ENCODE measurements at regions of chr12 and their contacts with region 1.

Region 1: DNA sequence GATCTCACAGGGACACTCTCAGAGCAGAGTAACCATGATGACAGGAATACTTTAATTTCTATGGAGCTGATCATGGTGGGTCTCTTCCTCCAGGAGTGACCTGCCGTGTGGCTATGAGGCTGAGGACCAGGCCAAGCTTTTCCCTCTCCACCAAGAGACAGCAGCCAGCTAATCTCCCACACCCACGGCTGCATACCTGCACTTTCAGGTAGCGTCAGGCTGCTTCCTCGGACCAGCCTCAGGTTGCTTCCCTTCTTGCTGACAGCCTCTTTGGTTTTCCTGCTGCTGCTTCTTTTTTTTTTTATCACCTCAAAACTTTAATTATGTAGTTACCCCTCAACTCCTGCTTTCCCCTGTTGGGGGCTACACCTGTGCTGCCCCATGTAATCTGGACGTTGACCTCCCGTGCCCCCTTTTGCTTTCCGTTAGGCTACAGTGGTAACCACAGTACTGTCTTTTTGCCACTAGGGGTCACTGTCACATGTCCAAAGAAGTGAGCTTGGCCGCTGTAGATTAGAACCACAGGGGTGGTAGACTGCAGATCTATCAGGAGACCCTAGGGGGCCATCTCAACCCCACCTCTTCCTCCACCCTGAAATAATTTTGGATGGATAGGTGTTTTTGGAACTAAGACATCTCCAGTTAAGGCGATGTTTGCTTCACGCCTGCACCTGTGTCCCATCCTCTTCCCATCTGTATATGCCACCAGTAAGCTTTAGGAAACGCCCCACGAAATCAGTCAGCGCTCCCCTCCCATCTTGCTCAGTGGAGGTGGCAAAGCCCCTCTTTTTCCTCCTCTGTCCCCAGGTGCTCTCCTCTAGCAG is 7.8 kb upstream of the PIP4K2C start:
- DNase-seq: peak; percentile 49 to 82 (median 75)
- H3K4me3 ChIP-seq: no peak overlapping the region
- H3K4me3 Mint-ChIP-seq: peak overlapping the region in 2 of 7 donors; percentile 4 to 82
- H3K27ac ChIP-seq: no peak overlapping the region
- H3K27ac Mint-ChIP-seq: peak overlapping the region in 6 of 8 donors; percentile 26 to 92 (median 82)
- H3K4me1 ChIP-seq: no peaks in the 10 kb centered on the region
- H3K4me1 Mint-ChIP-seq: peaks cover 5 to 7% (median 5%) of the 10 kb centered on the region in 3 donors
- H3K27me3 ChIP-seq: no peaks in the 10 kb centered on the region
- H3K27me3 Mint-ChIP-seq: peaks cover 6 to 14% of the 10 kb centered on the region in 2 donors

Region 2: GRCh38 chr12:57462251-57462911 is 120.8 kb before region 1 on chr12:
- CTCF ChIA-PET with region 1: interaction called, 11 read pairs
- POLR2A ChIA-PET with region 1: no interaction called
- DNase-seq: peak; percentile 77 to 92 (median 83)
- H3K4me3 ChIP-seq: peak overlapping the region; percentile 69
- H3K4me3 Mint-ChIP-seq: peak overlapping the region; percentile 85 to 95 (median 93)
- H3K27ac ChIP-seq: peak overlapping the region; percentile 9
- H3K27ac Mint-ChIP-seq: peak overlapping the region; percentile 8 to 93 (median 80)
- H3K4me1 ChIP-seq: peaks cover 33% of the 10 kb centered on the region
- H3K4me1 Mint-ChIP-seq: peaks cover 30 to 49% (median 36%) of the 10 kb centered on the region in 3 donors
- H3K27me3 ChIP-seq: peaks cover 7% of the 10 kb centered on the region
- H3K27me3 Mint-ChIP-seq: peaks cover 6 to 19% of the 10 kb centered on the region in 2 donors

Region 3: DNA sequence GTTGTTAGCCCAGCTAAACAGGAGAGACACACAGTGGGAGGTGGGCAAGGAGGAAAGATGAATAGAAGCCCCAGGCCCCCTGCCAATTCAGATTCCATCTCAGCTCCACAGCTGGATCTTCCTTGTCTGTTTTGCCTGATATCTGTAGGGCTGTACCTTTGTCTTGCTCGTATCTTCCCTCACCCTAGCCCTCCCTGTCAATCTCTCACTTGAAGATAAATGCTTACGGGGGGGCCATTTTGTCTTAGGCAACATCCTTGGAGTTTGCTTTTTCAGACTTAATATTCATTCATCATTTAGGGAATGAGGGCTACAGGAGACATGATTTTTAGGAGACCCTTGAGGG is 30.9 kb before region 1 on chr12:
- CTCF ChIA-PET with region 1: no interaction called
- POLR2A ChIA-PET with region 1: no interaction called
- DNase-seq: no peak
- H3K4me3 ChIP-seq: no peak overlapping the region
- H3K4me3 Mint-ChIP-seq: peak overlapping the region in 1 of 7 donors; percentile 35
- H3K27ac ChIP-seq: peak overlapping the region; percentile 38
- H3K27ac Mint-ChIP-seq: no peak overlapping the region
- H3K4me1 ChIP-seq: peaks cover 15% of the 10 kb centered on the region
- H3K4me1 Mint-ChIP-seq: peaks cover 14 to 24% (median 21%) of the 10 kb centered on the region in 3 donors
- H3K27me3 ChIP-seq: no peaks in the 10 kb centered on the region
- H3K27me3 Mint-ChIP-seq: peaks cover 0 to 9% of the 10 kb centered on the region in 2 donors

Region 4: DNA sequence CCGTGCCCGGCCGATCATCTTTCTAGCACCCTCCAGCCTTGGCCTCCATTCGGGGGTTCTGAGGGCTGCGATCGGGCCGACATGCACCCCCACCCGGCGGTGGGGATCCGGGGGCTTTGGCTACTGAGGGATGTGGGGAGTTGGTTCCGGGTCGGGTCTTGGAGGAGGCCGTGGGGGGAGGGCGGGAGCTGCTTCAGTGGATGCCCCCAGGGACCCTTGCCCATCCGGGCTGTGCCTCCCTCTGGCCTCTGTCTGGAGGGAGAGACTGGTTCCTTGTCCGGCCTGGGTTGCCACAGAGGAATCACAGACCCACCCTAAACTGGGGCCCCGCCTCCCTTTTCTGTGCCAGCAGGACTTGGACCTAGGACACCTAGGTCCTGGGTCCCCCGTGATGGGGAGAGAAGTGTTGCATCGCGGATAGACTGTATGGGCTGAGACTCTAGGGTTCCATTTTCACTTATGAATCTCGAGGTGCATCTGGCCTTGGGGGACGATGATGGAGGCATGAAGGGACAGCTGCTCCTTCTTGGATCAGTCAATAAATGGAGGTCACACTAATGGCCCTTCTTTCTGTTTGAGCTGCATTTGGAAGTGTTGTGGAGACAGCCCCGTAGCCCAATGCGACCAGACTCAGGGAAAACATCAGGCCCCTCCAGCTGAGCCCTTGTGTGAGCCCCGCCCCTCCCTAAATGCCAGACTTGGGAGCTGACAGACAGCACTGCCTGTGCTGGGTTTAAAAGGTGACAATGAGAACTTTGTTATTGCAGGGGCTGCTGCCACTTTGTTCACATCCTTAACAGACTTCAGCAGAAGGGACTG is 22.0 kb after region 1 on chr12:
- CTCF ChIA-PET with region 1: interaction called, 12 read pairs
- POLR2A ChIA-PET with region 1: no interaction called
- DNase-seq: no peak
- H3K4me3 ChIP-seq: peak overlapping the region; percentile 69
- H3K4me3 Mint-ChIP-seq: peak overlapping the region; percentile 85 to 94 (median 88)
- H3K27ac ChIP-seq: no peak overlapping the region
- H3K27ac Mint-ChIP-seq: peak overlapping the region in 6 of 8 donors; percentile 80 to 96 (median 90)
- H3K4me1 ChIP-seq: peaks cover 29% of the 10 kb centered on the region
- H3K4me1 Mint-ChIP-seq: peaks cover 32 to 43% (median 37%) of the 10 kb centered on the region in 3 donors
- H3K27me3 ChIP-seq: no peaks in the 10 kb centered on the region
- H3K27me3 Mint-ChIP-seq: peaks cover 0 to under 1% of the 10 kb centered on the region in 2 donors

Region 5: DNA sequence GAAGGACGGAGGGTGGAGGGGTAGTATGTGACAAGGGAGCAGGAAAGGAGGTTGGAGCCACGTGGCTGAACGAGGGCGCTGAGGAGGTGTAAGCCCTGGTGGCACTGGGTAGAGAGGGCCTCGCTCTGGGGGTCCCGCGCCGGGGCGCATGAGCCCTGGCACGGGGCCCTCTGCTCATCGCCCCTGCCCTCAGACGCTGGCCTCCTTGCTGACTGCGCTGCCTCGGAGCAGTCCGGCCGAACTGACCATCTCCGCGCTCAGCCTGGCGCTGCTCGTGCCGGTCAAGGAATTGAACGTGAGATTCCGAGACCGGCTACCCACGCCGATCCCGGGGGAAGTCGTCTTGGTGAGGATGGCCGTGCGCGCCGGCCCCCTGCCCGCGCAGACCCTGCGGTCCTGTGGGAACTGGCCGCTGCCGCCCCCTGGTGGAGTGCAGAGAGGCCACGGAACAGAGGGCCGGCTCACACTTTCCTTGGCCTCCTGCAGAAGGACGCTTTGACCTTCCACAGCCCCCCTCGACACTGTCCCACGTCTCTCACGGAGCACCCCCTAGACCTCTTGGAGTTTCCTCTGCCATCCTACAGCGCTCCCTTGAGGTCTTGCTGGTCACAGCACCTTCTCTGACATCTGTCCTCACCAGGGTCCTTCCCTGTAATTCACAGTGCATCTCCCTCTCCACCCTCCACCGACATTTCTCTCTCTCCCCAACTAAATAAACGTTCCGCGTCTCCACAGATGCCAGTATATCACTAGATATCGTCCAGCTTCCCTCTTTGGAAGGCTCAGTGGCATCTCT is 38.5 kb after region 1 on chr12:
- CTCF ChIA-PET with region 1: interaction called, 85 read pairs
- POLR2A ChIA-PET with region 1: no interaction called
- DNase-seq: peak; percentile 39 to 65 (median 50)
- H3K4me3 ChIP-seq: peak overlapping the region; percentile 59
- H3K4me3 Mint-ChIP-seq: peak overlapping the region; percentile 49 to 91 (median 84)
- H3K27ac ChIP-seq: no peak overlapping the region
- H3K27ac Mint-ChIP-seq: peak overlapping the region in 3 of 8 donors; percentile 19 to 53 (median 44)
- H3K4me1 ChIP-seq: peaks cover 30% of the 10 kb centered on the region
- H3K4me1 Mint-ChIP-seq: peaks cover 28 to 34% (median 32%) of the 10 kb centered on the region in 3 donors
- H3K27me3 ChIP-seq: peaks cover 77% of the 10 kb centered on the region
- H3K27me3 Mint-ChIP-seq: peaks cover 86 to 92% of the 10 kb centered on the region in 2 donors

Region 6: DNA sequence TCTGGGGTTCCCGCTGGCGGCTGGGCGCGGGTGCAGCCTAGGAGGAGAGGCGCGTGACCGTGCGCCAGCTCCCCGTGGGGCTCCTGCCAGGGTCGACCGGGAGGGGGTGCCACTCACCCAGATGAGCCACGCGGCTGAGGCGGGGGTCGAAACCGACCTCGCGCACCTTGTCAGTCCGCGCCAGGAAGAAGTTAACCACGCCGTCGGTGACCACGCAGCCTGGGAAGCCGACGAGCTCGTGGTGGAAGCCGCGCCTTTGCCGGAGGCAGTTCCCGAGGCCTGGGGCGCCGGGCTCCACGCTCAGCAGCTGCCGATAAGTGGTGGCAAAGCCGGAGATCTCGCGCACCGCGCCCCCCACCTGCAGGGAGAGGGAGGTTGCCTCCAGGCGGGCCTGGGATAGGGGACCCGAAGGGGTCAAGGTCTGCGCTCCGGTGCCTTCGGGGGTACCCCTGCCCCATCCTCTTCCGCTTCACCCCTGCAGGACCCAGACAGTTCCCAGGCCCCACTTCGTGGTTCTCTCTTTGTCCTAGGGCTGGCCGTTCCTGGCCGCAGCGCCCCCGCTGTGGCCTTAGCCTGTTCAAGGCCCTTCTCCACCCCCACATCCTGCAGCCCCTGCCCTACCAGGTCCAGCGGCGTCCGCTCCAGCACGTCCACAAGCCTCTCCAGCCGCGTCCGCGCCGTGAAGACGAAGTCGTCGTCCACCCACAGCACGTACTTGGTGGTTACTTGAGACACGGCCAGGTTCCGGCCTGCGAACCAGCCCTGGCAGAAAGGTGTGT is 44.5 kb after region 1 on chr12:
- CTCF ChIA-PET with region 1: interaction called, 85 read pairs
- POLR2A ChIA-PET with region 1: no interaction called
- DNase-seq: no peak
- H3K4me3 ChIP-seq: no peak overlapping the region
- H3K4me3 Mint-ChIP-seq: peak overlapping the region in 5 of 7 donors; percentile 15 to 50 (median 29)
- H3K27ac ChIP-seq: no peak overlapping the region
- H3K27ac Mint-ChIP-seq: no peak overlapping the region
- H3K4me1 ChIP-seq: peaks cover 5% of the 10 kb centered on the region
- H3K4me1 Mint-ChIP-seq: peaks cover 0 to 20% (median 5%) of the 10 kb centered on the region in 3 donors
- H3K27me3 ChIP-seq: peaks cover 65% of the 10 kb centered on the region
- H3K27me3 Mint-ChIP-seq: peaks cover 61 to 87% of the 10 kb centered on the region in 2 donors

Region 7: DNA sequence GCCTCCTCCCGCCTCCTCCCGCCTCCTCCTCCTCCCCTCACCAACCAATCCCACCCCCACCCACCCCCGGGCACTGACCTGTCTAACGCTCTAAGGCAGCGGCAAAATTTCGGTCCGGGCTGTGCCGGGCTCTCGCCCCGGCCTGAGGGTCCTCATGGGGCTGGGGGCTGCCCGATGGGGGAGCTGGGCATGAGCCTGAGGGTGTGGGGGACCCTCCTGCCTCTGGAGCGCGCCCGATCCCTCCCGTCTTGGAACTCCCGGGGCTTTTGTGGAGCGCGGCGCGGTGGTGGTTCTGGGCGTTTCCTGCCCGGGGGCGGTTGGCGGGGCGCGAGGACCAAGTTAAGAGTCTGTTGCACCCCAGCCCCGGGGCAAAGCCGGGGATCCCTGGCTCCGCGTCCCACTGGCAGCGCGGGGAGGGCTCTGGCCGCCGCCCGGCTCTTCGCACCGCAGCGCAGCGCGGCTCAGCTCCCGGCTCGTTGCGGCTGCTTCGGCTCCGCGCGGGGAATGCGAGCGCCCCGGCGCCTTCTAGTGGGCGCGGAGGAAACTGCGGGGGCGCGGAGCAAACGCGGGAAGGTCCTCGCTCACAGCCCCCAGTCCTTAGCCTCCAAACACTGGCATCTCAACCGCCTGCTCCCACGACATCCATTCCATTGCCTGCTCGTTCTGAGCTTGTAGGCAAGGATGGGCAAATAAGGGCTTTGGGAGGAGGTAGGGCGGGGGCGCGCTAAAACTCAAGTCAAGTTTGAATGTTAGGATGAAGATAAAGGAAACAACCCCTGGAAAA is 49.7 kb after region 1 on chr12 and contains the start of gene B4GALNT1:
- CTCF ChIA-PET with region 1: interaction called, 35 read pairs
- POLR2A ChIA-PET with region 1: no interaction called
- DNase-seq: peak; percentile 44 to 71 (median 57)
- H3K4me3 ChIP-seq: peak within 1 kb of the TSS; percentile 49
- H3K4me3 Mint-ChIP-seq: peak within 1 kb of the TSS; percentile 26 to 84 (median 71)
- H3K27ac ChIP-seq: no peak within 1 kb of the TSS
- H3K27ac Mint-ChIP-seq: peak within 1 kb of the TSS in 3 of 8 donors; percentile 14 to 33 (median 19)
- H3K4me1 ChIP-seq: peaks cover 11% of the 10 kb centered on the region
- H3K4me1 Mint-ChIP-seq: peaks cover 0 to 15% (median 8%) of the 10 kb centered on the region in 3 donors
- H3K27me3 ChIP-seq: peaks cover 22% of the 10 kb centered on the region
- H3K27me3 Mint-ChIP-seq: peaks cover 35 to 59% of the 10 kb centered on the region in 2 donors
- total RNA-seq, gene B4GALNT1: 2.9 to 4.1 TPM

Region 8: DNA sequence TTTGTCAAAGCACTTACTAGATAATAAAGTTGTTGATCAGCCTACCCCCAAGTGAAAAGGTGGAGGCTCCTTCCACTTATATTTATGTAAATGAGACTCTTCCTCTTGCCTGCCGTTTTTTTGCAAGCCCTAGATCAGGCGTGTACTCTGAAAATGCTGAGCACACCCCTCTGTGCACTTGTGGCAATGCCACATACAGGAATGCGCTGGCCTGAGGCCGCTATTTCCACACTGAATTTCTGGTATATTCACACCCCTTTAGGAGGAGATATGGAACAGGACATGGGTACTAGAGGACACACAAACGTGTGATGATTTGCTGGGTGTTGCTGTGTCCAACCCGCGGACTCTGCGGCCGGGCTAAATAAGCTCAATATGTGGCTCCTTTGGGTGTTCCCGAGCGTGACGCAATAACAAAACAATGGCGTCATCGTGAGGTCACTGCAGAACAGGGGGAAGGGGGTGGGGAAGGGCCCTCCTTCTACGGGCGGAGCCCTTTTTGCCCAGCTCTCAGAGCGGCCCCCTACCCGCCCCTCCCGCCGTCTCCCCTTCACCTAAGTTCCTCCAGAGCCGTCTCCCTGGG is 161.1 kb after region 1 on chr12:
- CTCF ChIA-PET with region 1: interaction called, 24 read pairs
- POLR2A ChIA-PET with region 1: no interaction called
- DNase-seq: peak in 3 of 5 donors; percentile 51 to 86 (median 66)
- H3K4me3 ChIP-seq: peak overlapping the region; percentile 74
- H3K4me3 Mint-ChIP-seq: peak overlapping the region; percentile 85 to 96 (median 90)
- H3K27ac ChIP-seq: peak overlapping the region; percentile 89
- H3K27ac Mint-ChIP-seq: peak overlapping the region; percentile 84 to 99 (median 97)
- H3K4me1 ChIP-seq: peaks cover 51% of the 10 kb centered on the region
- H3K4me1 Mint-ChIP-seq: peaks cover 51 to 67% (median 57%) of the 10 kb centered on the region in 3 donors
- H3K27me3 ChIP-seq: no peaks in the 10 kb centered on the region
- H3K27me3 Mint-ChIP-seq: peaks cover 0 to 5% of the 10 kb centered on the region in 2 donors